ENCODE measurements at regions of chr7 and their contacts with region 1.

Region 1: GRCh38 chr7:49461852-49462251 is 311.6 kb upstream of the VWC2 start:
- DNase-seq: no peak
- H3K4me3 ChIP-seq: no peak overlapping the region
- H3K27ac ChIP-seq: no peak overlapping the region
- H3K4me1 ChIP-seq: no peaks in the 10 kb centered on the region
- H3K27me3 ChIP-seq: no peaks in the 10 kb centered on the region
- CTCF ChIP-seq: no peak
- EP300 ChIP-seq: no peak
- POLR2A ChIP-seq: no peak

Region 2: GRCh38 chr7:48540746-48541145 is 921.1 kb before region 1 on chr7:
- in situ Hi-C with region 1: no loop called
- intact Hi-C with region 1: loop called (anchors 10 kb)
- DNase-seq: no peak
- H3K4me3 ChIP-seq: no peak overlapping the region
- H3K27ac ChIP-seq: no peak overlapping the region
- H3K4me1 ChIP-seq: no peaks in the 10 kb centered on the region
- H3K27me3 ChIP-seq: no peaks in the 10 kb centered on the region
- CTCF ChIP-seq: no peak
- EP300 ChIP-seq: no peak
- POLR2A ChIP-seq: no peak

Measured in transverse colon (tissue), 4 donors.